ENCODE measurements at regions of chr9 and their contacts with region 1.

Region 1: GRCh38 chr9:128927731-128928411 is 7.1 kb downstream of the PHYHD1 start:
- DNase-seq: peak; percentile 71 to 80
- H3K4me3 ChIP-seq: no peak overlapping the region
- H3K4me3 Mint-ChIP-seq: no peak overlapping the region
- H3K27ac Mint-ChIP-seq: peak overlapping the region; percentile 62
- H3K4me1 ChIP-seq: peaks cover 5% of the 10 kb centered on the region; the same call in 1 of the 2 replicates
- H3K4me1 Mint-ChIP-seq: peaks cover 8% of the 10 kb centered on the region
- H3K27me3 ChIP-seq: no peaks in the 10 kb centered on the region
- H3K27me3 Mint-ChIP-seq: no peaks in the 10 kb centered on the region
- CTCF ChIP-seq: peak; percentile 85

Region 2: DNA sequence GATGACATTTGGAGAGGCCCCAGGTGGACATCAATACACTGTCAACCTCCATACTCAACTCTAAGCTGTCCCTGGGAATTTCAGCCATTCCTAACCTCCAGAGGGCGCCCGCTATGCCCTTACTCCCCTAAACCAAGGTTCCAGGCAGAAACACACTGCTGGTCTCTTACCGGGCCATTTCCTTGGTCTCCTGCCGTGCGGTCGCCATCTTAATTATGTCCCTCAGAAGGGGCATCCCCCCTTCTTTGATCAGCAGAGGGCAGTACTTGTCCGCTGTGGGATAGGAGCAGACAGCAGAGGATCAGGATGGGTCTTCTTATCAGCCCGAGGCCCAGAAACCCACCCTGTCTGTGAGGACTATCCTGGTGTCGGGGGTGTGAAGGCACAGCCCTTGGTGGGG is 194.6 kb before region 1 on chr9:
- CTCF ChIA-PET with region 1: no interaction called
- POLR2A ChIA-PET with region 1: no interaction called
- intact Hi-C with region 1: loop called (anchors 1 kb)
- DNase-seq: peak; percentile 74 to 77
- H3K4me3 ChIP-seq: no peak overlapping the region
- H3K4me3 Mint-ChIP-seq: no peak overlapping the region
- H3K27ac Mint-ChIP-seq: no peak overlapping the region
- H3K4me1 ChIP-seq: no peaks in the 10 kb centered on the region
- H3K4me1 Mint-ChIP-seq: no peaks in the 10 kb centered on the region
- H3K27me3 ChIP-seq: no peaks in the 10 kb centered on the region
- H3K27me3 Mint-ChIP-seq: no peaks in the 10 kb centered on the region
- CTCF ChIP-seq: peak; percentile 50 to 66

Region 3: GRCh38 chr9:128881901-128882681 is 45.8 kb before region 1 on chr9 and contains the starts of genes KYAT1 and LRRC8A:
- CTCF ChIA-PET with region 1: interaction called, 4 read pairs
- POLR2A ChIA-PET with region 1: no interaction called
- intact Hi-C with region 1: loop called (anchors 2 kb)
- DNase-seq: peak; percentile 95 to 97
- H3K4me3 ChIP-seq: peak within 1 kb of the TSS; percentile 69
- H3K4me3 Mint-ChIP-seq: peak within 1 kb of the TSS; percentile 97
- H3K27ac Mint-ChIP-seq: peak within 1 kb of the TSS; percentile 96
- H3K4me1 ChIP-seq: peaks cover 16% of the 10 kb centered on the region
- H3K4me1 Mint-ChIP-seq: peaks cover 6% of the 10 kb centered on the region
- H3K27me3 ChIP-seq: no peaks in the 10 kb centered on the region
- H3K27me3 Mint-ChIP-seq: no peaks in the 10 kb centered on the region
- CTCF ChIP-seq: peak in 1 of 2 experiments; percentile 1
- total RNA-seq, gene KYAT1: 6.9 and 7.8 TPM in 2 replicates
- total RNA-seq, gene LRRC8A: 21.9 and 22.4 TPM in 2 replicates